ENCODE measurements at regions of chr22 and their contacts with region 1.

Region 1: GRCh38 chr22:29387921-29388758 is at the start of gene AP1B1:
- DNase-seq: peak; percentile 95
- H3K4me3 Mint-ChIP-seq: peak within 1 kb of the TSS; percentile 93
- H3K27ac Mint-ChIP-seq: peak within 1 kb of the TSS; percentile 86
- H3K4me1 Mint-ChIP-seq: peaks cover 38% of the 10 kb centered on the region
- H3K27me3 Mint-ChIP-seq: no peaks in the 10 kb centered on the region
- total RNA-seq, gene AP1B1: 84.0 and 89.5 TPM in 2 replicates

Region 2: GRCh38 chr22:29306175-29306834 is 81.8 kb before region 1 on chr22 and contains the start of gene GAS2L1:
- intact Hi-C with region 1: loop called (anchors 5 kb)
- DNase-seq: peak; percentile 37
- H3K4me3 Mint-ChIP-seq: peak within 1 kb of the TSS; percentile 81
- H3K27ac Mint-ChIP-seq: peak within 1 kb of the TSS; percentile 58
- H3K4me1 Mint-ChIP-seq: no peaks in the 10 kb centered on the region
- H3K27me3 Mint-ChIP-seq: peaks cover 4% of the 10 kb centered on the region
- total RNA-seq, gene GAS2L1: 2.6 and 3.2 TPM in 2 replicates

Region 3: GRCh38 chr22:29408945-29409344 is 20.8 kb after region 1 on chr22:
- intact Hi-C with region 1: loop called (anchors 1 kb)
- DNase-seq: no peak
- H3K4me3 Mint-ChIP-seq: no peak overlapping the region
- H3K27ac Mint-ChIP-seq: no peak overlapping the region
- H3K4me1 Mint-ChIP-seq: peaks cover 14% of the 10 kb centered on the region
- H3K27me3 Mint-ChIP-seq: peaks cover 9% of the 10 kb centered on the region

Region 4: GRCh38 chr22:29470159-29470855 is 82.2 kb after region 1 on chr22:
- intact Hi-C with region 1: loop called (anchors 2 kb)
- DNase-seq: peak; percentile 73
- H3K4me3 Mint-ChIP-seq: peak overlapping the region; percentile 47
- H3K27ac Mint-ChIP-seq: no peak overlapping the region
- H3K4me1 Mint-ChIP-seq: peaks cover 6% of the 10 kb centered on the region
- H3K27me3 Mint-ChIP-seq: peaks cover 16% of the 10 kb centered on the region

Region 5: GRCh38 chr22:29553351-29554224 is 165.4 kb after region 1 on chr22 and contains the start of gene THOC5:
- intact Hi-C with region 1: loop called (anchors 1 kb)
- DNase-seq: peak; percentile 86
- H3K4me3 Mint-ChIP-seq: peak within 1 kb of the TSS; percentile 93
- H3K27ac Mint-ChIP-seq: peak within 1 kb of the TSS; percentile 94
- H3K4me1 Mint-ChIP-seq: peaks cover 23% of the 10 kb centered on the region
- H3K27me3 Mint-ChIP-seq: no peaks in the 10 kb centered on the region
- total RNA-seq, gene THOC5: 69.0 and 76.2 TPM in 2 replicates

Measured in activated T-helper 1 cell treated with anti-CD3 and anti-CD28 coated beads, Interleukin-12 subunit alpha, Interleukin-12 subunit beta, Interleukin-2, Interleukin-4 antibody, amounts not matched to agents 30 ng/mL and 10 ng/mL and 1 ng/mL, durations not matched to agents 14 hours and 24 hours and 36 hours (primary cell).